Calu3 (cell line): ENCODE measurements at regions of chr5 and their contacts with region 1.

Region 1: GRCh38 chr5:154647114-154647760 is 107.9 kb upstream of the LARP1 start:
- DNase-seq: peak; percentile 55
- H3K4me3 Mint-ChIP-seq: peak overlapping the region; percentile 77
- H3K27ac Mint-ChIP-seq: peak overlapping the region; percentile 49
- H3K4me1 Mint-ChIP-seq: peaks cover 17% of the 10 kb centered on the region
- H3K27me3 Mint-ChIP-seq: peaks cover 19% of the 10 kb centered on the region
- CTCF ChIP-seq: no peak

Region 2: DNA sequence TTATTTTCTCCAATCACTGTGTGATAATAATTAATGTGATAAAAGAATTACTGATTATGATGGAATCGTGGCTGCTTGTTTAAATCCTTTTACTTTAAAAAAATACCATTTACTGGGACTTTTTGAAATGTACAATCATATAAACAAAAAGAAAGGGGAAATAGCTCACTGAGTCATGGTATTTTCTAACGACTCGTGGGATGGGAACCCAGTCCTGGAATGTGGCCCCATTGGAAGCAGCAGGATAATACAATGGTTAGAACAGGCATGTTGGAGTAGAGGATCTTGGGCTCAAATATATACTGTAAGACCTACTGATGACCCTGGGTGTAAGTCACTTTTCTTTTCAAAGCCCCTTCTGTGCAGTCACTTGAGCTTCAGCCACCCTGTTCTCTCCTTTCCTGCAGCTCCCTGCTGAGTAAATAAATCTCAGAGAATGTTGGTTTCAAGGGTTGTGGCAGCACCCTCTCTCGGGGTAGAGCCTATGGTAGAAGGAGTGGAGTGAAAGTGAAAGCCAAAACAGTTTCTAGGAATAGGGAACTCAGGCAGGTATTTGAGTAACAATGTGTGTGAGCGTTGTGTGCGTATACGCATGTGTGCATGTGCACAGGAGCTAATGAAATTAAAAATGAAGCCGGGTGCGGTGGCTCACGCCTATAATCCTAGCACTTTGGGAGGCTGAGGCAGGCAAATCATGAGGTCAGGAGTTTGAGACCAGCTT is 67.2 kb after region 1 on chr5:
- CTCF ChIA-PET with region 1: interaction called, 11 read pairs
- intact Hi-C with region 1: loop called (anchors 2 kb)
- DNase-seq: peak; percentile 34
- H3K4me3 Mint-ChIP-seq: peak overlapping the region; percentile 52
- H3K27ac Mint-ChIP-seq: peak overlapping the region; percentile 67
- H3K4me1 Mint-ChIP-seq: peaks cover 37% of the 10 kb centered on the region
- H3K27me3 Mint-ChIP-seq: no peaks in the 10 kb centered on the region
- CTCF ChIP-seq: no peak

Region 3: GRCh38 chr5:154811653-154812365 is 164.6 kb after region 1 on chr5:
- CTCF ChIA-PET with region 1: interaction called, 3 read pairs
- intact Hi-C with region 1: loop called (anchors 1 kb)
- DNase-seq: peak; percentile 75
- H3K4me3 Mint-ChIP-seq: no peak overlapping the region
- H3K27ac Mint-ChIP-seq: peak overlapping the region; percentile 2
- H3K4me1 Mint-ChIP-seq: peaks cover 9% of the 10 kb centered on the region
- H3K27me3 Mint-ChIP-seq: no peaks in the 10 kb centered on the region
- CTCF ChIP-seq: peak; percentile 87

Region 4: GRCh38 chr5:154857530-154858296 is 210.5 kb after region 1 on chr5:
- CTCF ChIA-PET with region 1: interaction called, 4 read pairs
- intact Hi-C with region 1: loop called (anchors 2 kb)
- DNase-seq: peak; percentile 97
- H3K4me3 Mint-ChIP-seq: peak overlapping the region; percentile 100
- H3K27ac Mint-ChIP-seq: peak overlapping the region; percentile 95
- H3K4me1 Mint-ChIP-seq: peaks cover 23% of the 10 kb centered on the region
- H3K27me3 Mint-ChIP-seq: no peaks in the 10 kb centered on the region
- CTCF ChIP-seq: no peak

Region 5: DNA sequence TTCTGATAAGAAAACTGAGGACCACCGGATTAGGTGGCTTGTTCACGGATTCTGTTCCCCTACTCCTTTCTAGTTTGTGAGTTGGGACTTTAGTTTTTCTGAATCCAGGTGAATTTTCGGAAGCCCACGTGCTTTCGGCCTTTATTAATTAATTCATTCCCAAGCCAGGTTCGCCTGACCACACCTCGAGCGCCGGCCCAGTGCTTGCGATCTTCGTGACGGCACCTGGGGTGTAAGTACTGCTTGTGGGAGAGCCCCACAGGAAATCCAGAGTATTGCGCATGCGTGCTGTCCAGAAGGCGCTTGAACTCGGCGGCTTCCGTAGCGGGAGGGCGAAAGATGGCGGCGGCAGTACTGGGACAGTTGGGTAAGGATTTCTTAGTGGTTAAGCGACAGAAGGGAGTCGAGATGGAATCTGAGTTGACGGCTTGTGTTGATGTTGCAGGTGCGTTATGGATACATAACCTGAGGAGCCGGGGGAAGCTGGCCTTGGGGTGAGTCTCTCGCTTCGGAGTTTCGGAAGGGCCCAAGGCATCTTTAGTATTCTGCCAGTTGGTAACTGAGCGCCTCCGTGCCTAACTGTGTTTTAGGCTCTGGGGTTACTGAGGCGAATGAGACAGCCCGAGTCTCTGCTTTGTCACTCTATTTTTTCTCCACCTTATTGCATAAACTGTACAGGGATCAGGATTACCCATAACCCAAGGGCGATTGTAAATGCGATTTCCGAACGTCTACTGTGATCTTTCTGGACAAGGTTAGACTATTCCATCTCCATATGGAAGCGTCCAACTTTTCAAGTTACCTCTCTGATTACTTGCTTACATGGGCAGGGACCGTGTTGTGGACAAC is 293.8 kb after region 1 on chr5 and contains the start of gene MRPL22:
- CTCF ChIA-PET with region 1: no interaction called
- intact Hi-C with region 1: loop called (anchors 1 kb)
- DNase-seq: peak; percentile 95
- H3K4me3 Mint-ChIP-seq: peak within 1 kb of the TSS; percentile 96
- H3K27ac Mint-ChIP-seq: peak within 1 kb of the TSS; percentile 94
- H3K4me1 Mint-ChIP-seq: peaks cover 8% of the 10 kb centered on the region
- H3K27me3 Mint-ChIP-seq: no peaks in the 10 kb centered on the region
- CTCF ChIP-seq: no peak
- total RNA-seq, gene MRPL22: 73.8 and 80.6 TPM in 2 replicates